ENCODE measurements at regions of chr12 and their contacts with region 1.

Region 1: GRCh38 chr12:20201733-20202132 is 166.6 kb upstream of the PDE3A start:
- DNase-seq: no peak
- ATAC-seq: no peak
- H3K4me3 ChIP-seq: no peak overlapping the region
- H3K27ac ChIP-seq: no peak overlapping the region
- H3K4me1 ChIP-seq: no peaks in the 10 kb centered on the region
- H3K27me3 ChIP-seq: no peaks in the 10 kb centered on the region; a peak in 1 of 4 replicates
- CTCF ChIP-seq: no peak
- EP300 ChIP-seq: no peak
- POLR2A ChIP-seq: no peak
- RAD21 ChIP-seq: no peak

Region 2: DNA sequence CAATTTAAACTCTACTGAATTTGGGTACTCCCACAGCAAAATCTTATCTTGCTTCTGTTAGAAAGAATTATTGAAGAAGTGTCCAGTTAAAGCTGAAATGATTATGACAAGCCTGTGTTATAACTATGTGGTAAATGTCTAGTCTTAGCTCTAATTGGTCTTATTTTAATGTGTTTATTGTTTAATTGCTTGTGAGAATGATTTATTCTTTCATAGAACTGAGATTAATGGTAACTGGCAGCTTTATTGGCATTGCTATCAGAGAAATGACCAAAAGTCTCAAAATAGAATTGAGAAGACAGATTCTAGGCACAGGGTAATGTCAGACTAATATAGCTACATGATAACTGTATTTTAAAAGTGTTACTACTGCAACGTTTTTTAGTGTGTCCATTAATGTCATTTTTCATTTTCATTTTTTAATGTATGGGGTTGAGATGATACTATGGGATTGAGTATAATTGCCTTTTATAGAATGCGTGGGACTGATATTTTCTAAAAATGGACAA is 303.8 kb before region 1 on chr12:
- CTCF ChIA-PET with region 1: no interaction called
- POLR2A ChIA-PET with region 1: no interaction called
- RAD21 ChIA-PET with region 1: no interaction called
- SMC1A ChIA-PET with region 1: no interaction called
- in situ Hi-C with region 1: no loop called
- intact Hi-C with region 1: no loop called
- DNase-seq: no peak
- ATAC-seq: no peak
- H3K4me3 ChIP-seq: no peak overlapping the region
- H3K27ac ChIP-seq: no peak overlapping the region
- H3K4me1 ChIP-seq: no peaks in the 10 kb centered on the region
- H3K27me3 ChIP-seq: no peaks in the 10 kb centered on the region
- CTCF ChIP-seq: no peak
- EP300 ChIP-seq: no peak
- POLR2A ChIP-seq: no peak
- RAD21 ChIP-seq: no peak

Region 3: GRCh38 chr12:20188930-20189653 is 12.6 kb before region 1 on chr12:
- CTCF ChIA-PET with region 1: interaction called, 5 read pairs
- POLR2A ChIA-PET with region 1: no interaction called
- RAD21 ChIA-PET with region 1: no interaction called
- SMC1A ChIA-PET with region 1: interaction called, 13 read pairs
- in situ Hi-C with region 1: no loop called
- intact Hi-C with region 1: no loop called
- DNase-seq: no peak
- ATAC-seq: no peak
- H3K4me3 ChIP-seq: no peak overlapping the region
- H3K27ac ChIP-seq: no peak overlapping the region
- H3K4me1 ChIP-seq: no peaks in the 10 kb centered on the region
- H3K27me3 ChIP-seq: no peaks in the 10 kb centered on the region
- CTCF ChIP-seq: no peak
- EP300 ChIP-seq: no peak
- POLR2A ChIP-seq: no peak
- RAD21 ChIP-seq: no peak

Region 4: GRCh38 chr12:20232931-20233675 is 31.4 kb after region 1 on chr12:
- CTCF ChIA-PET with region 1: no interaction called
- POLR2A ChIA-PET with region 1: no interaction called
- RAD21 ChIA-PET with region 1: no interaction called
- SMC1A ChIA-PET with region 1: no interaction called
- in situ Hi-C with region 1: no loop called
- intact Hi-C with region 1: no loop called
- DNase-seq: no peak
- ATAC-seq: no peak
- H3K4me3 ChIP-seq: no peak overlapping the region
- H3K27ac ChIP-seq: no peak overlapping the region
- H3K4me1 ChIP-seq: no peaks in the 10 kb centered on the region
- H3K27me3 ChIP-seq: no peaks in the 10 kb centered on the region
- CTCF ChIP-seq: no peak
- EP300 ChIP-seq: no peak
- POLR2A ChIP-seq: no peak
- RAD21 ChIP-seq: no peak